ENCODE measurements at regions of chr2 and their contacts with region 1.

Region 1: GRCh38 chr2:43239981-43240761 is 13.8 kb upstream of the ZFP36L2 start:
- DNase-seq: no peak
- ATAC-seq: peak in 1 of 2 donors; percentile 30
- H3K4me3 ChIP-seq: no peak overlapping the region
- H3K27ac ChIP-seq: peak overlapping the region; percentile 5 to 49 (median 36)
- H3K4me1 ChIP-seq: no peaks in the 10 kb centered on the region
- H3K27me3 ChIP-seq: no peaks in the 10 kb centered on the region
- CTCF ChIP-seq: no peak
- POLR2A ChIP-seq: no peak

Region 2: GRCh38 chr2:42835577-42836371 is 404.4 kb before region 1 on chr2:
- in situ Hi-C with region 1: loop called in 3 of 4 experiments (anchors 10 to 25 kb)
- intact Hi-C with region 1: no loop called
- DNase-seq: peak; percentile 35 to 73
- ATAC-seq: peak; percentile 88 to 89
- H3K4me3 ChIP-seq: no peak overlapping the region
- H3K27ac ChIP-seq: peak overlapping the region; percentile 36 to 62 (median 52)
- H3K4me1 ChIP-seq: peaks cover 0 to 2% of the 10 kb centered on the region in 2 donors
- H3K27me3 ChIP-seq: no peaks in the 10 kb centered on the region
- CTCF ChIP-seq: no peak
- POLR2A ChIP-seq: no peak

Region 3: GRCh38 chr2:42859006-42859552 is 381.1 kb before region 1 on chr2:
- in situ Hi-C with region 1: no loop called
- intact Hi-C with region 1: loop called (anchors 10 kb)
- DNase-seq: no peak
- ATAC-seq: no peak
- H3K4me3 ChIP-seq: no peak overlapping the region
- H3K27ac ChIP-seq: no peak overlapping the region
- H3K4me1 ChIP-seq: peaks cover 3% of the 10 kb centered on the region in 2 donors
- H3K27me3 ChIP-seq: no peaks in the 10 kb centered on the region
- CTCF ChIP-seq: peak; percentile 59 to 81 (median 76)
- POLR2A ChIP-seq: no peak

Region 4: DNA sequence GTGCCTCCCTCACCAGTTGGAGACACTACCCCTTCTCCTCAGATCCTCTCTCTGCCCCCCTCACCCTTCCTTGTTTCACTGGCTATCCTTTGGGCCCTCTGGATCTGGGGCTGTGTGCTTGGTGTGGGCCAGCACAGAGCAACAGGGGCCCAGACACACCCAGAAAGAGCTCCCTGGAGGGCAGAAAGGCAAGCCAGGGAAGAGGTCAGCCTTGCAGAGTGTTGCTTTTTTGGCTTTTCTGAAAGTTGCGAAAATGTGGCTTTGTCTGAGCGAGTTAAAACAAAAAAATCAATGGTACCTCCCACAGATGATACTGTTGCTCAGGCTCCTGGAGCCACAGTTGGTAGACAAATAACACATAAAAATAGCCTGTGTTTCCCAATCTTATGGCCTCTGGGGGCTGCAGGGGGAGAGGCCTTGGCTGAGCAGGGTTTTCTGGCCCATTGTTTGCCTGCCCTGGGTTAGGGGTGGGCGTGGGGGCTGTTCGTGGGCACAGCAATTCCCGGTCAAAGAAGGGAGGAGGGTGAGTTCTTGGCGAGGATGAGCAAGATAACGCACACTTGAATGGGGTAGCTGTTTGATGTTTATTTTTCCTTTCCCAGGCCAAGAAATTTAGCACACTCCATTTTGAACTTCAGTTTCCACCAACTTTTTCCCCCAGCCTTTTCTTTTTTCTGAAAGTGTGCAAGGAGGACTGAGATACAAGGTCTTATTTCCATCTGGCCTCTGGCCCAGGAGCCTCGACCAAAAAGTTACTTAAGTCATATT is 280.8 kb before region 1 on chr2:
- in situ Hi-C with region 1: loop called in 2 of 4 experiments (anchors 10 kb)
- intact Hi-C with region 1: no loop called
- DNase-seq: peak; percentile 44 to 65
- ATAC-seq: peak; percentile 48 to 49
- H3K4me3 ChIP-seq: no peak overlapping the region
- H3K27ac ChIP-seq: peak overlapping the region; percentile 65 to 81 (median 68)
- H3K4me1 ChIP-seq: peaks cover 42 to 43% of the 10 kb centered on the region in 2 donors
- H3K27me3 ChIP-seq: no peaks in the 10 kb centered on the region
- CTCF ChIP-seq: no peak
- POLR2A ChIP-seq: no peak

Region 5: DNA sequence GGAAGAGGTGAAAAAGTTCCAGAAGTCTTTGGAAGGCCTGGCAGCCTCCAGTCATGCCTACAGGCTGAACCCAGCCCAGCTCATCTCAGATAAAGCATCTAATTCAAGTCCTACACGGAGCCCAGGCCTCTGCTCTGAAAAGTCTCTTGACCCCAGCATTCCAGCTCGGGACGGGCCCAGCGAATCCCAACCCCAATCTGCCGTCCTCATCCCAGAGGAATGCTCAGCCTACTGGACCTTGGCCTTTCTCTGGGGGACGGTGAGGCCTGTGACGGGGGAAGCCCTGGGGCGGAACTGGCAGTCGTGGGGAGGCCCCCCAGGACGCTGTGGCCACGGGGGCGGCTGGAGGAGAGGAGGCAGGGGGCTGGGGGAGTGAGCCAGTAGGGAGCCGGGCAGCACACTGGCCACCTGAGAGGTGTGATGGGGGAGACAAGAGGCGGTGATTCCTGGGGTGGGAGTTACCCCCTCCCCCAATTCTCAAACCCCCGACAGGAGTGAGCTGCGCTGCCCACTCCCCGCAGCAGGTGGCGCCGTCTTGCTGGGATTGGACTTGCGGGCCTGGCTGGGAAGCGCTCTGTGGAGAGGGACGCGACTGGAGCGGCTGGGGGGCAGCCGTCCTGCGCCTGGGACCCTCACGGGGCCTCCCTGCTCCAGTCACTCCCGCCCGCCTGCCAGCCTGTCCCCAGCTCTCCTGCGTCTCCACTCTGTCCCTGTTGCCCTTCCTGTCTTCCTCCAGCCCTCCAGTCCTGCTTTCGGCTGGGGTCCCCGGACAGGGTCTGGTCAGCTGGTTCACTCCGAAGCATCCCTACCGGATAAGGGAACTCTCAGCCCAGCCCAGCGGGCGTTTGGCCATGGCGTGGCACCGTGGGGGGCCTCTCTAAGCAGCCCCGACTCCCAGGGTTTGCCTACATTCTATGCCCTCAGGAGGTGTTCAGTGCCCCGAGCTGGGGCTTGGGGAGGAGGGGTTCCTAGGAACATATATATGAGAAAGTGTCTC is 265.2 kb before region 1 on chr2:
- in situ Hi-C with region 1: loop called in 1 of 4 experiments (anchors 10 kb)
- intact Hi-C with region 1: no loop called
- DNase-seq: peak; percentile 63 to 65
- ATAC-seq: peak; percentile 81 to 82
- H3K4me3 ChIP-seq: peak overlapping the region; percentile 41 to 60 (median 48)
- H3K27ac ChIP-seq: peak overlapping the region in 3 of 4 donors; percentile 19 to 63 (median 54)
- H3K4me1 ChIP-seq: peaks cover 9 to 13% of the 10 kb centered on the region in 2 donors
- H3K27me3 ChIP-seq: no peaks in the 10 kb centered on the region
- CTCF ChIP-seq: peak; percentile 93 to 95 (median 94)
- POLR2A ChIP-seq: no peak

Region 6: DNA sequence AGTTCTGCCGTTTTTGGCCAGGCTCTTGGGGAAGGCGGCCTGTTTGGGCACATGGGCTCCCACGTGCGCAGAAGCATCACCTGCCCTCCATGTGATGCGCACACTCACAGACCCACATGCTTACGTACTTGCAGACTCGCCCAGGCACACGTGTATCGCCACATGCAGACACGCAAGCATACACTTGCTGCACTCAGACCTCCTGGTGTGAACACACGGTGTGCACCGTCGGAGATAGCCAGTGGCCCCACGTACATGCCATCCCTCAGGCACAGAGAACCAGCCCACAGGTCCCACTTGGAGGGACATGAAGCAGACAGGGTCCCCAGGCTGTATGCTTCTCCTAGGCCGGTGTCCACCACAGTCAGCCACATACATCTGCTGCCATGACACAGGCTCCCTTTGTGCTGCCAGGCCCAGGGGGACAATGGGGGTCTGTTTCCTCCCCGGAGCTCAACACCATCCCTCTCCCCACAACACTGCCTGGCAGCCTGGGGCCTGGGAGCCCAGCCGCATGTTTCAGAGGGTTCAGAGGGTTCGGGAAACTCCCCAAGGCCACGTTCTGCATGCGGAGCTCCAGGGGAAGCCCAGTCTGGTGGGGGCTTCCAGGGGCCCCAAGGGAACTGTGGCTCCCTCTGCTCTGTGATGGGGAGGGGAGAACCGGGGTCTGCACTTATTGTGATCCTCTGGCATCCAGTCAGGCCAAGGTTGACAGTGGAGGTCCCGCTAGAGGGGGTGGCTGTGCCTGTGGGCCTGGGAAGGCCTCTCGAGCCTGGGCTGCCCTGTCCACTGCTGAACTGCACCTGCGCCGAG is 239.7 kb before region 1 on chr2:
- in situ Hi-C with region 1: no loop called
- intact Hi-C with region 1: no loop called
- DNase-seq: no peak
- ATAC-seq: no peak
- H3K4me3 ChIP-seq: no peak overlapping the region
- H3K27ac ChIP-seq: no peak overlapping the region
- H3K4me1 ChIP-seq: no peaks in the 10 kb centered on the region
- H3K27me3 ChIP-seq: no peaks in the 10 kb centered on the region
- CTCF ChIP-seq: no peak
- POLR2A ChIP-seq: no peak